A549 (cell line): ENCODE measurements at regions of chr7 and their contacts with region 1.

Region 1: GRCh38 chr7:129367700-129368388 is 66.4 kb upstream of the STRIP2 start:
- DNase-seq: peak; percentile 69 to 76
- ATAC-seq: peak; percentile 96
- H3K4me3 ChIP-seq: no peak overlapping the region
- H3K27ac ChIP-seq: peak overlapping the region in 1 of 2 experiments; percentile 44; a peak in 3 of 6 replicates
- H3K4me1 ChIP-seq: 0 out of 3 replicates have a peak, but pooled peaks cover 6% of the 10 kb centered on the region
- CTCF ChIP-seq: peak; percentile 91
- EP300 ChIP-seq: peak in 1 of 2 experiments; percentile 54; a peak in 1 of 5 replicates
- POLR2A ChIP-seq: no peak
- RAD21 ChIP-seq: peak; percentile 84 to 86

Region 2: GRCh38 chr7:129351320-129351719 is 16.5 kb before region 1 on chr7:
- CTCF ChIA-PET with region 1: interaction called, 22 read pairs
- POLR2A ChIA-PET with region 1: no interaction called
- DNase-seq: no peak
- ATAC-seq: no peak
- H3K4me3 ChIP-seq: no peak overlapping the region
- H3K27ac ChIP-seq: no peak overlapping the region
- H3K4me1 ChIP-seq: no peaks in the 10 kb centered on the region
- CTCF ChIP-seq: no peak
- EP300 ChIP-seq: no peak
- POLR2A ChIP-seq: no peak
- RAD21 ChIP-seq: no peak

Region 3: GRCh38 chr7:129401967-129402860 is 34.4 kb after region 1 on chr7:
- CTCF ChIA-PET with region 1: interaction called, 17 read pairs
- POLR2A ChIA-PET with region 1: no interaction called
- DNase-seq: peak; percentile 12 to 20
- ATAC-seq: peak; percentile 64 to 86
- H3K4me3 ChIP-seq: no peak overlapping the region
- H3K27ac ChIP-seq: 0 out of 6 replicates have a peak overlapping the region, but pooled peaks of 1 of the 2 experiments have one; percentile 53
- H3K4me1 ChIP-seq: peaks cover 20% of the 10 kb centered on the region
- CTCF ChIP-seq: peak; percentile 38
- EP300 ChIP-seq: no peak
- POLR2A ChIP-seq: no peak
- RAD21 ChIP-seq: peak; percentile 52 to 68; a peak in 4 of 5 replicates

Region 4: DNA sequence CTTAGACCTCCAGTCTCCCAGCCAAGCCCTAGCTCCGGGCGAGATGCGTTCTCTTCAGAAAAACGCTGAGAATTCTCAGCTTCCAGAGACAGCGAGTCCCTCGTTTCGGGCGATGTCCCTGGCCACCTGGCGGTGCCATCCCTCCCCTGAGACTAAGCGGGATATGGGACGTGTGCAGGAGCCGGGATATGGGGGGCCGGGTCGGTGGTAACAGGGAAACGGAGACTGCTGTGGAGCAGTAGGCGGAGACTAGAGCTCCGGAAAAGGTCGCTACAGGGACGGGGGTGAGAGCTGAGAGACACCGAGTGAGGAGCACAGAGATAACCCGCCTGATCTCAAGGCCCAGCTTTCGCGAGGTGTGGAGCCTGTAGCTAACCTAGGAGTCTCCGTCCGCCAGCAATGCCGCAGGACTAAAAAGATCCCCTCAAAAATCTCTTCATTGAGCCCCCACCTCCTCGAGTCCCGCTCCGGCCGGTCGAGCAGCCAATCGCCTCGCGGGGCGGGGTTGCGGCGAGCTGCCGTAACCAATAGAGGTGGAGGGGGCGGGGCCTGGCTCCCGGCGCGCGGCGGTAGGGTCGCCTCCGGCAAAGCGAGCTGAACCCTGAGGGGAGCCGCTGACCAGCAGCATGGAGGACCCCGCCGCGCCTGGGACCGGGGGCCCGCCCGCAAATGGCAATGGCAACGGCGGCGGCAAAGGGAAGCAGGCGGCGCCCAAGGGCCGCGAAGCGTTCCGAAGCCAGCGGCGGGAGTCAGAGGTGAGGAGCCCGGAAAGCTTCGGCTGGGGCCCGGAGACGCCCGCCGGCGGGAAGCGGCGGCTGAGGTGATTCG is 66.2 kb after region 1 on chr7 and contains the start of gene STRIP2:
- CTCF ChIA-PET with region 1: interaction called, 14 read pairs
- POLR2A ChIA-PET with region 1: interaction called, 9 read pairs
- DNase-seq: peak; percentile 70 to 94
- ATAC-seq: peak; percentile 93 to 96
- H3K4me3 ChIP-seq: peak within 1 kb of the TSS; percentile 85
- H3K27ac ChIP-seq: peak within 1 kb of the TSS; percentile 66 to 87
- H3K4me1 ChIP-seq: peaks cover 12% of the 10 kb centered on the region
- CTCF ChIP-seq: no peak
- EP300 ChIP-seq: no peak
- POLR2A ChIP-seq: peak; percentile 37; the same call in 1 of the 2 replicates
- RAD21 ChIP-seq: no peak
- polyA plus RNA-seq, gene STRIP2: 4.9 and 6.5 TPM in 2 replicates

Region 5: GRCh38 chr7:129468087-129468486 is 100.2 kb after region 1 on chr7:
- CTCF ChIA-PET with region 1: interaction called, 129 read pairs
- POLR2A ChIA-PET with region 1: interaction called, 3 read pairs
- DNase-seq: no peak
- ATAC-seq: no peak
- H3K4me3 ChIP-seq: no peak overlapping the region
- H3K27ac ChIP-seq: no peak overlapping the region
- H3K4me1 ChIP-seq: peaks cover 10% of the 10 kb centered on the region; the same call in 1 of the 3 replicates
- CTCF ChIP-seq: no peak
- EP300 ChIP-seq: no peak
- POLR2A ChIP-seq: no peak
- RAD21 ChIP-seq: no peak

Region 6: DNA sequence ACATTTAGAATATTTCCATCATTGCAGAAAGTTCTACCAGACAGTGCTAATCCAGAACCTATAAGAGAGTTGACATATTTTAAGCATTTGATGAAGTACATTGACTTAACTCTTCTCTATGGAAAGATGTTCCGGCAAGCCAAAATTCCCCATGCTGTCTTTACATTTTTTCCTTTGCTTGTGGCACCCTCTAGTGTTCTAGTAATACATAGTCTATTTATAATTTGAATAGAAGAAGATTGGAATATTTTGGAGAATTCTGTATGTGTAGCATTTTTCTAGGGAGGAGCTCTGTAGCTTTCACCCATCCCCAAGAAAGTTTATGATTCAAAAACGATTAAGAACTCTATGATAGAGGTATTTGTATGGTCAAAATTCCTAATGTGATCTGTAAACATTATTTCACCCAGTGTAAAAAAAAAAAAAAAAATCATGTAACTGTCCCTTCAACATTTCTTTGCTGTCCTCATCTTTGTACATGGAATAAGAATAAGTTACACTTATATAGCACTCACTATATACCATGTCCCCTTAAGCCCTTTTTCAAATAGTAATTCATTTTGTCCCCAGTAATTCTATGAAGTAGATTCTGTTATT is 276.9 kb after region 1 on chr7:
- CTCF ChIA-PET with region 1: interaction called, 53 read pairs
- POLR2A ChIA-PET with region 1: no interaction called
- DNase-seq: peak in 1 of 2 experiments; percentile 55
- ATAC-seq: peak in 1 of 2 experiments; percentile 67; a peak in 3 of 6 replicates
- H3K4me3 ChIP-seq: no peak overlapping the region
- H3K27ac ChIP-seq: no peak overlapping the region
- H3K4me1 ChIP-seq: peaks cover 28% of the 10 kb centered on the region; the same call in 2 of the 3 replicates
- CTCF ChIP-seq: peak; percentile 79
- EP300 ChIP-seq: no peak
- POLR2A ChIP-seq: no peak
- RAD21 ChIP-seq: peak; percentile 81